Activated naive CD4-positive, alpha-beta T cell treated with anti-CD3 and anti-CD28 coated beads for 36 hours (primary cell): ENCODE measurements at regions of chr11 and their contacts with region 1.

Region 1: DNA sequence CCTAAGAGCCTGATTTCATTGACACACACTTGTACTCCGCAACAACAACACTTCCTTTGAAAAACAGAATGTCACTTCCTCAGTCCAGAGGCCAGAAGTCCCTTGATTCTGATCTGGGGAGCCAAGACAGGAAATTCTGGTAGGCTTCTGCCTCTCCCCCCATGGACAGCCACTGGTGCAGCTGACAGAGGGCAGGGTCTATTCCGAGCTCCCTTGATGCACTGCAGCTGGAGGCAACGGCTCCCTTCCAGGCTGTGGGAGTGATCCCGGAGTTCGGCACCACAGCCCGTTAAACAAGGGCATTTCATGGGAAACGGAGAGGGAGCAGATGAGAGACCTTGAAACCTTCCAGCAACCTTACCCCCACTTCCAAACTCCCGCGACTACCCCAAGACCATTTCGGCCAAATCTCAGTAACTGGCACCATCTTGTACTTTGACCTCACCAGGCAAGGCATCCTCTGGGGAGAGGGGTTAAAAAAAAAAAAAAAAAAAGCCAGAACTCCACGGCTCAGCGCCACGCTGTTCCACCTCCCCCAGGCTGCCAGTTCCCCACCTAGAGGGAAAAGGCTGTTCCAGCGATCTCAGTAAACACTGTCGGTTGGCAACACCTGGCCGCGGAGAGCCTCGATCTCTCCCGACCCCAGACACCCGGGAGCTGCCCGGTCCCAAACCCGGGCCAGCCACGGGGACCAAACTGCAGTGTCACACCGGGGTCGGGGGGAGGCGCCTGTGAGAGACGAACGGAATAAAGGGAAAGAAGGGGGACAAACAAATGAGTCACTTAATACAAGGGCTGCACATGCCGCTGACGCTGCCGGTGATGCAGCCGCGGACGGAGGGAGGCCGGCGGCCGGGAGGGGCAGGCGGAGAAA is 1.1 kb downstream of the GAB2 start:
- DNase-seq: peak; percentile 88
- H3K4me3 Mint-ChIP-seq: peak overlapping the region; percentile 81
- H3K27ac Mint-ChIP-seq: peak overlapping the region; percentile 44
- H3K4me1 Mint-ChIP-seq: peaks cover 22% of the 10 kb centered on the region
- H3K27me3 Mint-ChIP-seq: peaks cover 33% of the 10 kb centered on the region

Region 2: DNA sequence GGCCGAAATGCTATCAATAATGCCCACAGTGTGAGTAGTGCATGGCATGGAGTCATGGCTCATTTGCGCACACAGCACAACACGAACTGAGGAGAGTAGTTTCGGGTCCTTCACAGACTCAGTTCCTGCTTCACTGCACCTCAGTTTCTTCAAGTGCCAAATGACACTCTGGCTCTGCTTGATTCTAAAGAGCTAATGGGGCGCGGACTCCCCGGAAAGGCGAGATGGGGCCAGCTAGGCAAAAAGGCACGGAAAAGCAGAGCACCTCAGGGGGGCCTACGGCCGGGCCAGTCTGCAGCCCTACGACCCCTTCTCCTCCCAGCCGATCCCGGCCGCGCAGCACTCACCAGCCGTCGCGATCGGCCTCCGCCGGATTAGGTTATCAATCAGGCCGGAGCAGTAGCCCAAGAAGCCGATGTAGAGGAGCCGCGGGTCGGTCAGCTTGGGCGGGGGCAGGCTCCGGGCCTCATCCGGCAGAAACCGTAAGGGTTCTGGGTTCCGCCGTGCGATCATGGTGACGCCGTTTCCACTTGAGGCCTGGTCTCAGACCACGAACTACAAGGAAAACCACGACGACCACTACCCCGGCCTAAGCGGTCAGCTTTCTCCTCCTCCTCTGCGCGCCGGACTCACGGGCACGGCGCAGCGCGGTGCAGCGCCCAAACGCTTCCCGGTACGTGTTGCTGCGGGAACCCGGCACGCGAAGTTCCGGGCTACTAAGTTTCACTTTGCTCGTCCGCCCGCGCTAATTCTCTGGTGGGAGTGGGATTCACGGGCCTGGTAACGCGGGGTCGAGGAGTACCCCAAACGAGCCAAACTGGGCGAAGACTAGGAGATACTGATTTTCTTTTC is 337.1 kb before region 1 on chr11 and contains the start of gene NDUFC2:
- CTCF ChIA-PET with region 1: no interaction called
- intact Hi-C with region 1: loop called (anchors 1 kb)
- DNase-seq: peak; percentile 75
- H3K4me3 Mint-ChIP-seq: peak within 1 kb of the TSS; percentile 92
- H3K27ac Mint-ChIP-seq: peak within 1 kb of the TSS; percentile 86
- H3K4me1 Mint-ChIP-seq: peaks cover 45% of the 10 kb centered on the region
- H3K27me3 Mint-ChIP-seq: no peaks in the 10 kb centered on the region
- total RNA-seq, gene NDUFC2: 180 to 183 TPM

Region 3: DNA sequence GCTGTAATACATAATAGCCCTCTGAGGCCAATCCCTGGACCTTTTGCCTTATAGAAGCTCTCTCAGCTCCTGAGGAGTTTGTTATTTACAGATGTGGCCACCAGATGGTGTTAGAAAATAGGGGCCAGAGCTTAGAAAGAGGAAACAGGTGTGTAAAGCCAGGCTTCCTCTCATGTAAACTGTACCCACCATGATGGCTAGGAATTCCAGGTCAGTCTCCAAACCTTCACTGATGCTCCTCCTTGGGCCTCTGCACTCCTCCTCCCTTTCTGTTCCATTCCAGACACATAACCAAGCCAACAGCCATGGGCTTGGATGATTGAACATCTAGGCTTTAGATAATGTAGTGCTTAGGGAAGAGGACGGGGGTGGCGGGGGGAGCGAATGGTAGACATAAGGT is 188.1 kb before region 1 on chr11:
- CTCF ChIA-PET with region 1: interaction called, 5 read pairs
- intact Hi-C with region 1: loop called (anchors 1 kb)
- DNase-seq: peak; percentile 28
- H3K4me3 Mint-ChIP-seq: no peak overlapping the region
- H3K27ac Mint-ChIP-seq: no peak overlapping the region
- H3K4me1 Mint-ChIP-seq: peaks cover 18% of the 10 kb centered on the region
- H3K27me3 Mint-ChIP-seq: no peaks in the 10 kb centered on the region

Region 4: DNA sequence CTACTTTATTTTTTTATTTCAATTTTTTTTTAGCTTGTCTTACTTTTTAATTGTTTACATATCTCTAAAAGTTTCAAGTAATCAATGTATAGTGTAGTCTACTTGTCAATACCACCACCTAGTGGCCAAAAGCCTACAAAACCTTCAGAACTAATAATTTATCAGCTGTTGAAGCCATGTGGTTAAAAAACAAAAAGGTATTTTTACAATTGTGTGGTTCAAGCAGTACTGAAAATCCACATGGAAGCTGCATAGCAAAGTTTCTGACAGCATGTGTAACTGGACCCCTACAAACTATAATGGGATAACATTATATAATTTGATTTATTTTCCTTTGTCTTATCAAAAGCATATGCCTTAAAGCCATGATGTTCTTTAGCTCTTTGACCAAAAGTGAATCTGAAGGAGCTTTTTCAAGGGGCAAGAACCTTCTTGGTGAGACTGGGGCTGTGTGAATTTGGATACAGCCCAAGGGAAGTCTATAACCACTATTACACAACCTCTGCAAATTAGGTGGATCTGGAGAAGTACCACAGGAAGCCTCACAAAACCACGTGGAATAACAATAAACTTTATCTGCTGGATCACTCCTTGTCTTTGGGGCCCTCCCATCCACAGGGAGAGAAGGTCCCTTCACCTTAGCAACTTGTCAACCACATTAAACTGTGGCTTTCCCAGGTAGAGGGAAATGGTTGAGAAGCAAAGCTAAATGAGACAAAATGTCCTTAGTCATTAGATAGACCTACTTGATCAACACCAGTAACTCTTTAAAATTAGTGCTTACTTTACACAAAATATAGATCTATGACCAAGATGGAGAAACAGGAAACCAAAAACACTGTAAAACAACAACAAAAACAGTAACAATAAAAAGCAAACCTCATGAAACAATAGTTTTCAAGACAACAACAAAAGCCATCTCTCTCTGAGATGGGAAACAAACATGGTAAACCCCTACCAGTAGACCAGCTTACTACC is 148.2 kb after region 1 on chr11:
- CTCF ChIA-PET with region 1: interaction called, 81 read pairs
- intact Hi-C with region 1: loop called (anchors 1 kb)
- DNase-seq: peak; percentile 54
- H3K4me3 Mint-ChIP-seq: no peak overlapping the region
- H3K27ac Mint-ChIP-seq: no peak overlapping the region
- H3K4me1 Mint-ChIP-seq: peaks cover 27% of the 10 kb centered on the region
- H3K27me3 Mint-ChIP-seq: no peaks in the 10 kb centered on the region

Region 5: DNA sequence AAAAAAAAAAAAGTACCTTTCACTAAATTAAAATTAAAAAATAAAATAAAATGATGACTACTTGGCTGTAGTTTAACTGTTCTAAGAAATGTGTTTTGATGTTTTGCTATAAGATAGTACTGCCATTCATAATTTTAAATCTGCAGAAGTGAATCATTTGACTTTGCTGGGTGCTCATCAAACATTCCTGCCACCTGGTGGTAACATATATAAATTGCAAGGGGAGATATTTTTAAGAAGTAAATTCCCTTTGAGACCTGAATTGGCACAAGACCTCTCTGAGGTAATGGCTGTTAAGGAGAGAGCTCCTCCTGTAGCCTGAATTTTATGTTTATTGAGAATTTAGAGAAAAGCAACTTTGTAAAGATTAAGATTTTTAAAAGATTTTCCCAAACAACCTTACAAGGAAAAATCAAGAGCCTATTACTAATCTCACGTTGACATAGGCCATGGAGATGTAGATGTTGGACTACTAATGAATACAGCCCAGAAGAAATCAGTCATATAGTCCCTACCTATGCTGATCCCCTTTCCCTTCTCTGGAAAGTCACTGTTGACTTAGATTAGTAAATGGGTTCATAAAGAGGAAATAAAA is 170.0 kb after region 1 on chr11:
- CTCF ChIA-PET with region 1: interaction called, 10 read pairs
- intact Hi-C with region 1: loop called (anchors 1 kb)
- DNase-seq: no peak
- H3K4me3 Mint-ChIP-seq: no peak overlapping the region
- H3K27ac Mint-ChIP-seq: no peak overlapping the region
- H3K4me1 Mint-ChIP-seq: no peaks in the 10 kb centered on the region
- H3K27me3 Mint-ChIP-seq: no peaks in the 10 kb centered on the region